Sigmoid colon (tissue), 7 donors: ENCODE measurements at regions of chr12 and their contacts with region 1.

Region 1: DNA sequence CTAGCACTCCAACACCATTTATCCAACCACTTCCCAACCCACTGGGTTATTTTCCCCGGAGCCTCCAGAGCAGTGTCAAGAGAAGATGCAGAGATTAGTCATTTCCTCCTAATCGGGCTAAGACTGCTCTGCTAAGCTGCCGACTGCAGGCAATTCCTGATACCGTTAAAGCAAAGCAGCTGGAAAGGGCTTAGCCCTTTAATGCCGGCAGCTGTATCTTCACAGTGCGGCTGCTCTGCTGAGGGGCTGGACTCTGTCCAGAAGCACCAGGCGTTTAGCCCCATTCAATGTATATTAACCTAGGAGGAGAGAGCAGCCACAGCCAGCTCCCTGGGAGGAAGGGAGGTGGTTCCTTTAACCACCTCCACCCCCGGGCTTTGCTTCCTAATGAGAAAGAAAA is 11.1 kb downstream of the AQP6 start:
- DNase-seq: no peak
- H3K4me3 ChIP-seq: no peak overlapping the region
- H3K27ac ChIP-seq: peak overlapping the region in 3 of 4 donors; percentile 24 to 69 (median 50)
- H3K4me1 ChIP-seq: peaks cover 0 to 72% (median 52%) of the 10 kb centered on the region in 4 donors
- H3K27me3 ChIP-seq: no peaks in the 10 kb centered on the region
- CTCF ChIP-seq: no peak
- EP300 ChIP-seq: no peak
- POLR2A ChIP-seq: no peak

Region 2: DNA sequence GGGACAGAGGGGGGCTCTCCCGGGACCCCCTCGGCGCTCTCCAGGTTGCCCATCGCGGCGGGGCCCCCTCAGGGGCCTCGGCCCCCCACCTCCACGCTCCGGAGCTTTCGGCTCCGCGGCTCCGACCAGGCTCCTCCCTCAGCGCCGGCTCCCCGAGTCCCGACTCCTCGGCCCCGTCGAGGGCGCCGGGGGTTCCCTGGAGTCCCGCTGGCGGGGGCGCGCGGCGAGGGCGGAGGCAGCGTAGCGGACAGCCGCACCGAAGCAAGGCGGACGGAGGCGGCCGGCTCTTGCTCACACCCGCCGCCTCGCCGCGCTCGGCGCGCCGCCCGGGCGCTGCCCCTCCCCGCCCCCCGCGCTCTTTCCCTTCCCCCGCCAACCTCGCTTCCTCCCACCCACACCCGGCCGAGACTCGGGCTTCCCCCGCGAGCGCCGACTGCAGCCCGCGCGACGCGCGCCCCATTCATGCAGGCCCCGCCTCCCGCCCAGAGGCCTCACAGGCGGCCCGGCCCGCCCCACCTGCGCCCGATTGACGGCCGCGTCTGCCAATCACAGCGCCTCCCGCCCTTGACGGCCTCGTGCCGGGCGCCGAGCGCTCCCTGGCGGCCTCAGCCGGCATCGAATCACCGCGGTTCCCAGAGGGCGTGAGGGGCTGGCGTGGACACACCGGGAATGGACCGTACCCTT is 276.6 kb before region 1 on chr12 and contains the start of gene FMNL3:
- intact Hi-C with region 1: no loop called
- DNase-seq: peak; percentile 99
- H3K4me3 ChIP-seq: peak within 1 kb of the TSS; percentile 55 to 97 (median 84)
- H3K27ac ChIP-seq: peak within 1 kb of the TSS; percentile 82 to 95 (median 89)
- H3K4me1 ChIP-seq: peaks cover 0 to 28% (median 18%) of the 10 kb centered on the region in 4 donors
- H3K27me3 ChIP-seq: no peaks in the 10 kb centered on the region
- CTCF ChIP-seq: peak; percentile 94 to 98 (median 98)
- EP300 ChIP-seq: no peak
- POLR2A ChIP-seq: peak in 1 of 2 donors; percentile 30
- total RNA-seq, gene FMNL3: 9.4 to 12.2 (median 11.0) TPM

Region 3: DNA sequence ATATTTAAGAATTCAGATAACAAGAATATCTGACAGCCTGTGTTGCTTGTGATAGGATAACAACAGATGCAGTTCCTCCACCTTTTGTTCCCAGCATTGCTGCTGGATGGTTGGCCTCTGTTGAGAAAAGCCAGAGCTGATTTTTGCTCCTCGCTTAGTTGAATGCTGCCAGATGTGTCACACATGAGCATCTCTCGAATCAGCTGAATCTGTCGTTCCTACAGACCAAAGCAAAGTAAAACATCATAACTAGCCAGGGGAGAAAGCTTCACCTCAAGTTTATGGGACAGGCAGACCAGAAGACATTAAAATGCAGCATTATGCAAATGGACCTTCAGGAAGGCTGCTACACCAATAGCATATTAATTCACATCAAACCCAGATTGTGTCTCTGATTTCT is 21.3 kb after region 1 on chr12:
- intact Hi-C with region 1: loop called (anchors 2 kb)
- DNase-seq: no peak
- H3K4me3 ChIP-seq: no peak overlapping the region
- H3K27ac ChIP-seq: peak overlapping the region; percentile 53 to 79 (median 72)
- H3K4me1 ChIP-seq: peaks cover 0 to 60% (median 39%) of the 10 kb centered on the region in 4 donors
- H3K27me3 ChIP-seq: no peaks in the 10 kb centered on the region
- CTCF ChIP-seq: no peak
- EP300 ChIP-seq: no peak
- POLR2A ChIP-seq: no peak

Region 4: GRCh38 chr12:50024805-50025186 is 40.9 kb after region 1 on chr12:
- intact Hi-C with region 1: loop called (anchors 5 kb)
- DNase-seq: no peak
- H3K4me3 ChIP-seq: peak overlapping the region; percentile 75 to 79 (median 76)
- H3K27ac ChIP-seq: peak overlapping the region; percentile 64 to 66 (median 66)
- H3K4me1 ChIP-seq: peaks cover 0 to 23% (median 13%) of the 10 kb centered on the region in 4 donors
- H3K27me3 ChIP-seq: no peaks in the 10 kb centered on the region
- CTCF ChIP-seq: no peak
- EP300 ChIP-seq: no peak
- POLR2A ChIP-seq: no peak